Activated CD4-positive, alpha-beta T cell treated with anti-CD3 and anti-CD28 coated beads for 36 hours (primary cell): ENCODE measurements at regions of chr1 and their contacts with region 1.

Region 1: DNA sequence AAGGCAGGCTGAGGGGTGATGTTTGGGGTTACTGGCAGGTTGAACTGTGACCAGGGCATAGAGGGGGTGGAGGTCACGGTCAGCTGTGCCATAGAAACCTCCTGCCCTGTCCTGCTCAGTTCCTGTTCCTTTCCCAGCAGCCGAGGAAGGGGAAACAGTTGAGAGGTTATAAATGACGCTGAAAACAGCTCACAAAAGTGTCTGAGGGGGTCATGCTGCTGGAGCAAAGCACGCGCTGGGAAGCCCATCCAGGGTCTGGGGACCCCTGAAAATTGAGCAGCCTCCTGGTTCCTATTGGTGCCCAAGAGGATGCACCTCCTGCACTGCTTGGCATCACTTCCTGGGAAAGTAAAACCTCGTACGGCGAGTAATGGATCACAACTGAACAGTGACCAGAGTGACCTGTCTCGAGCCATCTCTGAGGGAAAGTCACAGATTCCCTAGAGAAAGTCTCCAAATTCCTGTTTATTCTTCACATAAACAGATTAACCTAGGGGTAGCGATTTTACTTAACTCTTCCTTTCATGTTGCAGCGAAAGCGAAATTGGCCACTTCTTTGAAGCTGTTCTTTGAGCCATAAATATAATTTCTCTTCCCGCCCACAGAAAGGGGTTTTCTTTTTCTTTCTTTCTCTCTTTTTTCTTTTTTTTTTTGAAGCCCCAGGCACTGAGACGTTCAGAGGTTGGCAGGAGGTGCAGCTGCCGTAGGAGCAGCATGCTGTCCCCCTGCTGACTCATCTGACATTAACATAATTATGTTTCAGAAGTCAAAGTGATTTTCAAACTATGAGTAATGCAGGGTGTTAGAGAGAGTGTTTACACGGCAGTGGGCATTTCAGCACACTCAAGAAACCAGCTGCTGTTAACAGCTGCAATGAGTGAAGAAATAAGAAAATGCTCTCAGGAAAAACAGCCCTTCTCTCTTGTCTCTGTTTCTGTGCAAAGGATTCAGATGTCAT is 41.8 kb upstream of the ATF3 start:
- DNase-seq: peak; percentile 81
- ATAC-seq: peak; percentile 97
- H3K4me3 Mint-ChIP-seq: peak overlapping the region; percentile 77
- H3K27ac Mint-ChIP-seq: peak overlapping the region; percentile 91
- H3K4me1 Mint-ChIP-seq: peaks cover 33% of the 10 kb centered on the region
- H3K27me3 Mint-ChIP-seq: peaks cover 2% of the 10 kb centered on the region

Region 2: GRCh38 chr1:211939876-211940468 is 626.8 kb before region 1 on chr1:
- CTCF ChIA-PET with region 1: no interaction called
- POLR2A ChIA-PET with region 1: no interaction called
- intact Hi-C with region 1: loop called in 1 of 2 experiments (anchors 2 kb)
- DNase-seq: peak; percentile 78
- ATAC-seq: peak; percentile 55
- H3K4me3 Mint-ChIP-seq: no peak overlapping the region
- H3K27ac Mint-ChIP-seq: no peak overlapping the region
- H3K4me1 Mint-ChIP-seq: peaks cover 47% of the 10 kb centered on the region
- H3K27me3 Mint-ChIP-seq: no peaks in the 10 kb centered on the region

Region 3: GRCh38 chr1:212595787-212596714 is 29.2 kb after region 1 on chr1:
- CTCF ChIA-PET with region 1: interaction called, 7 read pairs
- POLR2A ChIA-PET with region 1: interaction called, 5 read pairs
- intact Hi-C with region 1: loop called (anchors 1 kb)
- DNase-seq: peak; percentile 64
- ATAC-seq: peak; percentile 91
- H3K4me3 Mint-ChIP-seq: peak overlapping the region; percentile 58
- H3K27ac Mint-ChIP-seq: peak overlapping the region; percentile 89
- H3K4me1 Mint-ChIP-seq: peaks cover 39% of the 10 kb centered on the region
- H3K27me3 Mint-ChIP-seq: peaks cover 12% of the 10 kb centered on the region

Region 4: DNA sequence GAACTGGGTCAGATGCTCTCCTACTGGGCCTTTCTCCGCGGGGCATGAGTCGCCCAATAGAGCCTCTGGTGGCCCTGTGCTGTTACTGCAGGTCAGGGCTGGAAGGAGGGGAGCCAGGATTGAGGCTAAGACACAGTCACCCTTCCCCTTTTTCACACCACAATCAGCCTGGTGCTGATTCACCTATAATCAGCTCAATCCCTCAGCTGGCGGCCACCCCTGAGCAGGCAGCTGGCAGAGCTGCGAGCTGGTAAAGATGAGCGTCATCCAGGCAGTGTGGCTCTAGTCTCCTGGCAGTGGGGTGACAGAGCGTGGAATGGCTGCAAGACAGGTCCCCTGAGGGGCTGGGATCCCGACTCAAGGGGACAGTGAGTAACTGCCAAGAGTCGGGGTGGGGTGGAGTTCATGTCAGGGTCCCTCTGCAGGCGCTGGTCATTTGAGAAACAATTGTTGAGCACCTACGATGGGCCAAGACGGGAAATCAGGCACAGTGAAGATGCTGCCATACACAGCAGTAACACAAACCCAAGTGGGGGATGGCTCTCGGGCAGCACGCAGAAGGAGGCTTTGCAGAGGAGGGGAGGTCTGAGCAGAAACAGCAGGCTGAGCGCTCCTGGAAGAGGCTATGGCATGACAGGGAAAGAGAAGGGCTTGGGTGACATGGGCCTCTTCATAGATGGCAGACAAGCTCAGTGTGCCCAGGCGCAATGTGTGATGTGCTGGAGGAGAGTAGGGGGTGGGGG is 63.5 kb after region 1 on chr1:
- CTCF ChIA-PET with region 1: no interaction called
- POLR2A ChIA-PET with region 1: interaction called, 3 read pairs
- intact Hi-C with region 1: loop called in 1 of 2 experiments (anchors 2 kb)
- DNase-seq: peak; percentile 80
- ATAC-seq: peak; percentile 97
- H3K4me3 Mint-ChIP-seq: no peak overlapping the region
- H3K27ac Mint-ChIP-seq: no peak overlapping the region
- H3K4me1 Mint-ChIP-seq: peaks cover 7% of the 10 kb centered on the region
- H3K27me3 Mint-ChIP-seq: peaks cover 3% of the 10 kb centered on the region

Region 5: GRCh38 chr1:213051127-213051880 is 484.5 kb after region 1 on chr1 and contains the start of gene RPS6KC1:
- CTCF ChIA-PET with region 1: no interaction called
- POLR2A ChIA-PET with region 1: no interaction called
- intact Hi-C with region 1: loop called in 1 of 2 experiments (anchors 2 kb)
- DNase-seq: peak; percentile 92
- ATAC-seq: peak; percentile 97
- H3K4me3 Mint-ChIP-seq: peak within 1 kb of the TSS; percentile 82
- H3K27ac Mint-ChIP-seq: peak within 1 kb of the TSS; percentile 93
- H3K4me1 Mint-ChIP-seq: peaks cover 27% of the 10 kb centered on the region
- H3K27me3 Mint-ChIP-seq: peaks cover 9% of the 10 kb centered on the region
- total RNA-seq, gene RPS6KC1: 4.9 to 5.7 TPM